MCF 10A (cell line): ENCODE measurements at regions of chr9 and their contacts with region 1.

Region 1: DNA sequence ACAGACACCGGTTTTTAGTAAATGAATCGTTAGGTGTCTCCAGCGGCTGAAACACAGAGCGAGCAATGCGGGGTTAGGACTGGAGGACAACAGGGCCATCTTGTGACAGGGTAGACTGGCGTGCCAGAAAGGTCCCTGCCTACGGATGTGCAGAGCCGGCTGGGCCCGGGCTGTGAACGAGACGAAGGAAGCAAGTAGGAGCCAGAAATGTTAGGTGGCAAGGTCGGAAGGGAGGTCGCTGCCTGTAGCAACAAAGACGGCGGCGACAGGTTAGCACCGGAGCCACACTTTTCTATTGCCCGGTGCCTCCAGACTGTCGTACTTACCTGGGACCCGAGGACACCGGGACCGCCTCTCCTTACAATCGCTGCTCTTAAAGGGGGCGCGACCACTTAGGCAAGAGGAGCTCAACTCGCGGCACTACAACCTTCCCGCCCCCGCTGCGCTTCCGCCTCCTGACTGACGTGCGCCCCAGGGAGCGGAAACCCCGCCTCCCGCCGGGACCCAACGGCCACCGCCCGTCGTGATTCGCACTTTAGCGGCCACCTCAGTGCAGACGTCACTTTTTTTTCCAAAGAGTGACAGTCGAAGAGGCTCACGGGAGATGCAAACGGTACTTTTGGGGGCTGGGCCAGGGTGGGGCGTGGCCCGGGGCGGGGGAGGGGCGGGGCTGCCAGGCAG is at the start of gene INIP:
- DNase-seq: peak; percentile 97
- H3K4me3 Mint-ChIP-seq: peak within 1 kb of the TSS; percentile 100
- H3K27ac Mint-ChIP-seq: peak within 1 kb of the TSS; percentile 98
- H3K4me1 Mint-ChIP-seq: peaks cover 8% of the 10 kb centered on the region
- H3K27me3 Mint-ChIP-seq: no peaks in the 10 kb centered on the region
- CTCF ChIP-seq: peak; percentile 6
- total RNA-seq, gene INIP: 28.0 and 33.5 TPM in 2 replicates

Region 2: GRCh38 chr9:112677040-112677439 is 40.8 kb before region 1 on chr9:
- CTCF ChIA-PET with region 1: no interaction called
- POLR2A ChIA-PET with region 1: no interaction called
- intact Hi-C with region 1: no loop called
- DNase-seq: no peak
- H3K4me3 Mint-ChIP-seq: no peak overlapping the region
- H3K27ac Mint-ChIP-seq: no peak overlapping the region
- H3K4me1 Mint-ChIP-seq: no peaks in the 10 kb centered on the region
- H3K27me3 Mint-ChIP-seq: no peaks in the 10 kb centered on the region
- CTCF ChIP-seq: no peak

Region 3: GRCh38 chr9:112750111-112750767 is 32.4 kb after region 1 on chr9 and contains the start of gene SNX30:
- CTCF ChIA-PET with region 1: interaction called, 7 read pairs
- POLR2A ChIA-PET with region 1: interaction called, 46 read pairs
- intact Hi-C with region 1: loop called (anchors 2 kb)
- DNase-seq: peak; percentile 90
- H3K4me3 Mint-ChIP-seq: peak within 1 kb of the TSS; percentile 98
- H3K27ac Mint-ChIP-seq: peak within 1 kb of the TSS; percentile 98
- H3K4me1 Mint-ChIP-seq: peaks cover 23% of the 10 kb centered on the region
- H3K27me3 Mint-ChIP-seq: no peaks in the 10 kb centered on the region
- CTCF ChIP-seq: no peak
- total RNA-seq, gene SNX30: 9.0 and 9.6 TPM in 2 replicates